Caco-2 (cell line): ENCODE measurements at regions of chr3 and their contacts with region 1.

Region 1: GRCh38 chr3:17972959-17973906 is 230.8 kb upstream of the TBC1D5 start:
- DNase-seq: peak; percentile 75 to 80
- H3K4me3 ChIP-seq: peak overlapping the region; percentile 2; the same call in 1 of the 2 replicates
- H3K4me3 Mint-ChIP-seq: peak overlapping the region; percentile 52
- H3K27ac Mint-ChIP-seq: peak overlapping the region; percentile 56
- H3K4me1 ChIP-seq: peaks cover 32% of the 10 kb centered on the region
- H3K4me1 Mint-ChIP-seq: peaks cover 26% of the 10 kb centered on the region
- H3K27me3 ChIP-seq: no peaks in the 10 kb centered on the region
- H3K27me3 Mint-ChIP-seq: no peaks in the 10 kb centered on the region
- CTCF ChIP-seq: no peak

Region 2: GRCh38 chr3:17945799-17946399 is 27.3 kb before region 1 on chr3:
- CTCF ChIA-PET with region 1: no interaction called
- POLR2A ChIA-PET with region 1: no interaction called
- intact Hi-C with region 1: loop called (anchors 2 kb)
- DNase-seq: no peak
- H3K4me3 ChIP-seq: no peak overlapping the region
- H3K4me3 Mint-ChIP-seq: no peak overlapping the region
- H3K27ac Mint-ChIP-seq: no peak overlapping the region
- H3K4me1 ChIP-seq: peaks cover 23% of the 10 kb centered on the region; the same call in 1 of the 2 replicates
- H3K4me1 Mint-ChIP-seq: peaks cover 41% of the 10 kb centered on the region
- H3K27me3 ChIP-seq: no peaks in the 10 kb centered on the region
- H3K27me3 Mint-ChIP-seq: no peaks in the 10 kb centered on the region
- CTCF ChIP-seq: no peak

Region 3: GRCh38 chr3:17985658-17986347 is 12.6 kb after region 1 on chr3:
- CTCF ChIA-PET with region 1: no interaction called
- POLR2A ChIA-PET with region 1: no interaction called
- intact Hi-C with region 1: no loop called
- DNase-seq: no peak
- H3K4me3 ChIP-seq: no peak overlapping the region
- H3K4me3 Mint-ChIP-seq: no peak overlapping the region
- H3K27ac Mint-ChIP-seq: no peak overlapping the region
- H3K4me1 ChIP-seq: 0 out of 2 replicates have a peak, but pooled peaks cover 6% of the 10 kb centered on the region
- H3K4me1 Mint-ChIP-seq: no peaks in the 10 kb centered on the region
- H3K27me3 ChIP-seq: no peaks in the 10 kb centered on the region; the same call in 1 of the 2 replicates
- H3K27me3 Mint-ChIP-seq: no peaks in the 10 kb centered on the region
- CTCF ChIP-seq: no peak

Region 4: DNA sequence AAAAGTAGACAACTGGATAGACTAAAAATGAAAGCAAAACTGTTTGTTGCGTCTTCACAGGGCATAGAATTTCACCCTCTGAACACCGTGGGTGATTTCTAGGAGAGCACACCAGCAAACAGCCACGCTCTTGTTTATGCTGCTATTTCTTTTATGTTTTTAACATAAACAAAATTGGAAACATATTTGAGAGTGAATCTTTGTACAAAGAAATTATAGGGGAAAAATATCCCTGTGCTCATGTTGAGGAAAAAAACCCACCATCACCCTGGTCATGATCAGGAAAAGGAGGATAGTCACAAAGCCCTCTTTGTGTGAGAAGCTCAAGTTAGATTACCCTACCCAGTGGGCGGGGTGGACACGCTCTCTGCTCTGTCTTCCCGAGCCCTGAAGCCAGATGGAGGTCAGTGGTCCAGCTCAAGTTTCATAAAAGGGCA is 138.6 kb after region 1 on chr3:
- CTCF ChIA-PET with region 1: no interaction called
- POLR2A ChIA-PET with region 1: no interaction called
- intact Hi-C with region 1: no loop called
- DNase-seq: no peak
- H3K4me3 ChIP-seq: no peak overlapping the region
- H3K4me3 Mint-ChIP-seq: no peak overlapping the region
- H3K27ac Mint-ChIP-seq: no peak overlapping the region
- H3K4me1 ChIP-seq: no peaks in the 10 kb centered on the region
- H3K4me1 Mint-ChIP-seq: no peaks in the 10 kb centered on the region
- H3K27me3 ChIP-seq: no peaks in the 10 kb centered on the region
- H3K27me3 Mint-ChIP-seq: peaks cover 3% of the 10 kb centered on the region
- CTCF ChIP-seq: no peak